Sciatic nerve (tissue), 2 donors: ENCODE measurements at regions of chr1 and their contacts with region 1.

Region 1: GRCh38 chr1:203702130-203702577 is 62.8 kb upstream of the LAX1 start:
- DNase-seq: peak; percentile 72
- ATAC-seq: peak; percentile 74

Region 2: GRCh38 chr1:203504397-203505250 is 197.5 kb before region 1 on chr1:
- intact Hi-C with region 1: loop called (anchors 5 kb)
- DNase-seq: peak; percentile 92
- ATAC-seq: peak; percentile 68